Left colon (tissue), 2 donors: ENCODE measurements at regions of chr9 and their contacts with region 1.

Region 1: GRCh38 chr9:96327694-96328352 is 25.8 kb upstream of the HSD17B3 start:
- DNase-seq: peak in 1 of 2 donors; percentile 48
- ATAC-seq: peak; percentile 77

Region 2: DNA sequence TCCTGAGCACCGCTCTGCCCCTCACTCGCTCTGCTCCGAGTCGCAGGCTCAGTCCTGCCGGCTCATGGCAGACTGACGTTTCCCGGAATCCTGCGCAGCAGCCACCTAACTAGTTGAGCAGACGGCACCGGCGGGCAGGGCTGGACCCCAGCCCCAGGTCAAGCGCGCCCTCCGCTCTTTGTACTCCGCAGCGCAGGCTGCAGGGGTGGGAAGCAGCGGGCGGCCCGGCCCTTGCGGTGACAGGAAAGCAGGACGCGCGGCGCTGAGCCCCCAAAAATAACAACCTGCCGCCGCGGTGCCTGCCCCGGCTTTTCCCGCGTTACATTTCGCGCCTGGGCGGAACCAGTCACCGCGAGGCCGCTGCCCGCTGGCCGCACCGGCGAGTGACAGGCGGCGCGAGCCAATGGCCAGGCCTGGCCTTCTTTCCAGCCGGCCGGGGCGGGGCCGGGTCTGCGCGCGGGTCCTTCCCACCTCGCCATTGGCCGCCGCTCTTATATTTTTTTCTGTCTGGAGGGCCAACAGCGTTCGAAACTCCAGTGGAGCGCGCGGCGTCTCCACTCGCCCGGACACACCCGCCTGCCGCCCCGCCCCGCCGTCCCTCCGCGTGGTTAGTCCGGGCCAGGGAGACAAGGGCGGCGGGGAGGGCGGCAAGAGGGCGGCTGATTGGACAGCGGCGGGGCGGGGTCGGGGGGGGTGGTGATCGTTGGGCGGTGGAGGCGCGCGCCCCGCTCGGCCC is 90.4 kb after region 1 on chr9 and contains the start of gene ZNF367:
- intact Hi-C with region 1: no loop called
- DNase-seq: peak; percentile 98
- ATAC-seq: peak; percentile 78
- total RNA-seq, gene ZNF367: 1.6 to 3.4 TPM

Region 3: DNA sequence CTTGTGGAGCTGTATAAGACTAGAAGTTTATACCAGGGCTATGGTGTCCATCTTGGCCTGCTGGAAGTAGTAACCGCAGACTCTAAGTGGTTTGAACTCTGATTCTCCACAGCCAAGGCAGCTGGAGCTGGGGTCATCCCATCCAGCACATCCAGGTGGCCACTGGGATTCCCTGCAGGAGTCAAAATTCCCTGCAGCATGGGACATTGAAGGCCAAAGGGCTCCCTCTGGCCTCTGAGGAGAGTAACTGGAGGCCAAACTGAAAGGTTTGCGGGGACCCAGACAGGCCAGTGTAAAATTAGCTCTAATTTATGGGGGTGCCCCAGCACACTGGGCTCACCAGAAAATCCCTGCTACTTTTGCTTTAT is 339.5 kb after region 1 on chr9:
- intact Hi-C with region 1: loop called in 1 of 2 experiments (anchors 5 kb)
- DNase-seq: no peak
- ATAC-seq: no peak